Adrenal gland (tissue), 19 donors: ENCODE measurements at regions of chr3 and their contacts with region 1.

Region 1: DNA sequence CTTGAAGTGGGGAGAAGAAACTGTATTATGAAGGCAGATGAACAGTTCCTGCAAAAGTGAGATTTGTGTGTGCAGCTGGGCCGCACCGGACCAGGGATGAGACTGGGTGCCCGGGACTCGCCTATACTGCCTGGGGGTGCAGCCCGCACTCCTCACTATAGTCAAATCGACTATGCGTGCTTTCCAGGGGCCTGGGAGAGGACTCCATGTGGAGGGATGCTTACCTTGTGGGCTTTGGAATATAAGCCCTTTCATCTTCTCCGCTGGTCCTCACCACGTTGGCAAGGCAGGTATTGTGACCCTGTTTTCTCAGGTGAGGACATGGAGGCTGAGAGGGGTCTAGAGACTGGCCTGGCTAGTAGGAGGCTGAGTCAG is 33.0 kb upstream of the APOD start:
- DNase-seq: peak in 2 of 7 donors; percentile 6 to 48
- H3K4me3 ChIP-seq: no peak overlapping the region
- H3K27ac ChIP-seq: no peak overlapping the region
- H3K4me1 ChIP-seq: no peaks in the 10 kb centered on the region
- H3K27me3 ChIP-seq: no peaks in the 10 kb centered on the region
- CTCF ChIP-seq: no peak
- POLR2A ChIP-seq: no peak

Region 2: GRCh38 chr3:195542698-195543499 is 73.8 kb before region 1 on chr3 and contains the start of gene PPP1R2:
- intact Hi-C with region 1: no loop called
- DNase-seq: peak; percentile 90 to 96 (median 94)
- H3K4me3 ChIP-seq: peak within 1 kb of the TSS; percentile 36 to 97 (median 74)
- H3K27ac ChIP-seq: peak within 1 kb of the TSS; percentile 45 to 98 (median 83)
- H3K4me1 ChIP-seq: peaks cover 12 to 42% of the 10 kb centered on the region in 2 donors
- H3K27me3 ChIP-seq: no peaks in the 10 kb centered on the region
- CTCF ChIP-seq: no peak
- POLR2A ChIP-seq: peak; percentile 94 to 99
- total RNA-seq, gene PPP1R2: 35.8 to 179 (median 50.1) TPM

Region 3: DNA sequence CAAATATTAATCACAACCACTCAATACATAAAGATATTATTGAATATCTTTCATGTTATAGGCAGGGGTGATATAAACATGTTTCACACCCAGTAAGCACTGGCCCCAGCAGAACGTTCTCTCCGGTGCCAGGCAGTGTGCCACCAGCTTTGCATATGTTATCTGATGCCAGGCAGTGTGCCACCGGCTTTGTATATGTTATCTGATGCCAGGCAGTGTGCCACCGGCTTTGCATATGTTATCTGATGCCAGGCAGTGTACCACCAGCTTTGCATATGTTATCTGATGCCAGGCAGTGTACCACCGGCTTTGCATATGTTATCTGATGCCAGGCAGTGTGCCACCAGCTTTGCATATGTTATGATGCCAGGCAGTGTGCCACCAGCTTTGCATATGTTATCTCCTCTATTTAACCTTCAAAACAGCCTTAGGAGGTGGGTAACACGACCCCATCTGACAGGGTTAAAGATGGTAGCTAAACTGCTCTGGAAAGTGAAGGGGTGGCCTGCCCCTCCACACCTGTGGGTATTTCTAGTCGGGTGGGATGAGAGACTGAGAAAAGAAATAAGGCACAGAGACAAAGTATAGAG is 111.0 kb after region 1 on chr3:
- intact Hi-C with region 1: loop called in 1 of 2 experiments (anchors 10 kb)
- DNase-seq: no peak
- H3K4me3 ChIP-seq: no peak overlapping the region
- H3K27ac ChIP-seq: no peak overlapping the region
- H3K4me1 ChIP-seq: no peaks in the 10 kb centered on the region
- H3K27me3 ChIP-seq: no peaks in the 10 kb centered on the region
- CTCF ChIP-seq: no peak
- POLR2A ChIP-seq: no peak

Region 4: GRCh38 chr3:195900436-195901375 is 284.0 kb after region 1 on chr3:
- intact Hi-C with region 1: no loop called
- DNase-seq: peak; percentile 39 to 75 (median 48)
- H3K4me3 ChIP-seq: no peak overlapping the region
- H3K27ac ChIP-seq: peak overlapping the region in 2 of 5 donors; percentile 16 to 44
- H3K4me1 ChIP-seq: peaks cover 15 to 22% of the 10 kb centered on the region in 2 donors
- H3K27me3 ChIP-seq: no peaks in the 10 kb centered on the region
- CTCF ChIP-seq: no peak
- POLR2A ChIP-seq: peak in 1 of 2 donors; percentile 26